ENCODE measurements at regions of chr16 and their contacts with region 1.

Region 1: DNA sequence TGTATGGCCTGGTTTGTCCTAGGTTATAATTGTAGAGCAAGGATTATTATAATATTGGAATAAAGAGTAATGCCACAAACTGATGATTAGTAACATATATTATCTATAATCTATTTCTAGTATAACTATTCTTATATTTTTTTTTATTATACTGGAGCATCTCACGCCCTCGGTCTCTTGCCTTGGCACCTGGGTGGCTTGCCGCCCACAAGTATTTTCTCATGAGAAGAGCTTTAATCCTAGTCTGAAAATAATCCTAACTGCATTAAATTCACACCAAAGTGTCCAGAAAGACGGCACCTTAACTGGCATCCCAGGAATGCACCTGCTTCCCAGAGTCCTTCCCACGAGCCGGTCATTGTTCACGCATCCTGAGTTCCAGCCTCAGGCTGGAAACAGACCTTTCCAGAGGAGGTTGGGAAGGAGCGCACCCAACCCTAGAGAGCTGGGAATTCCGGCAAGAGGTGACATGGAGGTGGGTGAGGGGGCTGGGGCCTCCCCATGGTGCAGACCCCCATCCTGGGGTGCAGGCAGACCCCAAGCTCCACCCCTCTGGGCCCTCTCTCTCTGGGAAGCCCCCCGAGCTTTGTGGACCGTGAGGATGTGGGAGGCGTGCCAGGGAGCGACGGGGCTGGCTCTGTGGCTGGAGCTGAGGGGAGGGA is 15.9 kb downstream of the CHMP1A start:
- DNase-seq: no peak
- ATAC-seq: no peak
- H3K4me3 ChIP-seq: no peak overlapping the region
- H3K4me3 Mint-ChIP-seq: peak overlapping the region; percentile 70
- H3K27ac ChIP-seq: no peak overlapping the region
- H3K27ac Mint-ChIP-seq: no peak overlapping the region
- H3K4me1 ChIP-seq: peaks cover 9% of the 10 kb centered on the region
- H3K4me1 Mint-ChIP-seq: peaks cover 8% of the 10 kb centered on the region
- H3K27me3 ChIP-seq: peaks cover 0 to 2% of the 10 kb centered on the region in 2 experiments
- H3K27me3 Mint-ChIP-seq: no peaks in the 10 kb centered on the region
- CTCF ChIP-seq: no peak

Region 2: DNA sequence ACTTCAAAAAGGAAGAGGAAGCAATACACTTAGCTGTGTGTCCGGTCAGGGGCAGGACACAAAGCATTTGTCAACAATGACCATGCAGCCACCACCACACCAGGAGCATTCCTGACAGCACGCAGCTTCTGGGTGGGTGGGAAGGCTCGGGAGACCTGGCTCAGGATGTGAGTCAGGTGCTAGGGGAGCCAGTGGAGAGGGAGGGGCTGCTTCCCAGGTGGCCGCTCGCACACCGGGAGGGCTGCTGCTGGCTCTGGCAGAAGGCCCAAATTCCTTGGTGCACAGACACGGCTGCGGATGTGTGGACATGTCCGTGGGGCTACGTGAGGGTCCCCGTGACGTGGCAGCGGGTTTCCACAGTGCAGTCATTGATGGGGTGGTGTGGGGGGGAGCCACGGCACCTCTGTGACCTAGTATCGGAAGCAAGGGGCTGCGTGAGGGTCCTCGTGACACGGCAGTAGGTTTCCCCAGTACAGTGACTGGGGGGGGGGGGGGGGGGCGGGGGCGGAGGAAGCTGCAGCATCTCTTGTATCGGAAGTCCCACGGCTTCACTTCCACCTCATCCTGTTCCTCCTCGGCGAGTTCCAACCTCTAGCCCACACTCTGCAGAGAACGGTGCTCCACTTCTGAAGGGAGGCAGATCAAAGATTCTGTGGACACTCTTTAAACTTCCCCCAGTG is 311.3 kb before region 1 on chr16:
- CTCF ChIA-PET with region 1: no interaction called
- POLR2A ChIA-PET with region 1: no interaction called
- intact Hi-C with region 1: loop called in 1 of 2 experiments (anchors 1 kb)
- DNase-seq: peak in 6 of 9 experiments; percentile 23 to 85 (median 51)
- ATAC-seq: peak; percentile 55
- H3K4me3 ChIP-seq: peak overlapping the region; percentile 16 to 43
- H3K4me3 Mint-ChIP-seq: peak overlapping the region; percentile 60
- H3K27ac ChIP-seq: peak overlapping the region; percentile 45 to 81
- H3K27ac Mint-ChIP-seq: peak overlapping the region; percentile 73
- H3K4me1 ChIP-seq: peaks cover 77% of the 10 kb centered on the region
- H3K4me1 Mint-ChIP-seq: peaks cover 83% of the 10 kb centered on the region
- H3K27me3 ChIP-seq: no peaks in the 10 kb centered on the region
- H3K27me3 Mint-ChIP-seq: no peaks in the 10 kb centered on the region
- CTCF ChIP-seq: no peak

Region 3: GRCh38 chr16:89534252-89534756 is 107.3 kb before region 1 on chr16:
- CTCF ChIA-PET with region 1: interaction called, 3 read pairs
- POLR2A ChIA-PET with region 1: no interaction called
- intact Hi-C with region 1: loop called in 1 of 2 experiments (anchors 1 kb)
- DNase-seq: peak; percentile 6 to 78 (median 59)
- ATAC-seq: peak; percentile 93
- H3K4me3 ChIP-seq: peak overlapping the region in 1 of 2 experiments; percentile 7
- H3K4me3 Mint-ChIP-seq: peak overlapping the region; percentile 55
- H3K27ac ChIP-seq: peak overlapping the region; percentile 9 to 49
- H3K27ac Mint-ChIP-seq: peak overlapping the region; percentile 94
- H3K4me1 ChIP-seq: peaks cover 24% of the 10 kb centered on the region
- H3K4me1 Mint-ChIP-seq: peaks cover 25% of the 10 kb centered on the region
- H3K27me3 ChIP-seq: no peaks in the 10 kb centered on the region
- H3K27me3 Mint-ChIP-seq: no peaks in the 10 kb centered on the region
- CTCF ChIP-seq: no peak

Region 4: DNA sequence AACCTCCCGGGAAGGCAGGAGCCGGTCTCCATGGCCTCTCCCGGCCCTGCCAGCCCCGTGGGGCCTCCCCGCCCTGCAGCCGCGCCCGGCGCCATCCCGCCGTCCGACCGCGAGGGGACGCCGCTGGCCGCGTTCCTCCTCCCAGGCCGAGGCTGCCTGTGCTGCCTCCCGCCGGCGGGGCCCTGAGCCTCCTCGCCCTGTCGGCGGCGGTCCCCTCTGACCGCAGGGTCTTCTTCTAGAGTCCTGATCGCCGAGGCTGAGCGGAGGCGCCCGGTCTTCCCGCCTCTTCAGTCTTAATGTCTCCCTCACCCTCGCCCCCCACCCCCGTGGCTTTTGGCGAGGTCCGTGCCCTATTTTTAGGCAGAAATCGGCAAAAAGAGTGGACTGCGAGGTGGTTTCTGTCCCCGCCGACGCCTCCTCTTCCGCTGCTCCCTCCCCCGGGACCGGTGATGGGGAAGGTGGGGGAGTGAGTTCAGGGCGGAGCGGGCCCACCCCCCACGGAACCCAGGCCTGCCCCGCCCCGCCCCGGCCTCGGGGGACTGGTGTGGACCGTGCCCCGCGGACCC is 66.8 kb before region 1 on chr16:
- CTCF ChIA-PET with region 1: no interaction called
- POLR2A ChIA-PET with region 1: no interaction called
- intact Hi-C with region 1: loop called in 1 of 2 experiments (anchors 5 kb)
- DNase-seq: peak in 7 of 9 experiments; percentile 40 to 71 (median 57)
- ATAC-seq: peak; percentile 53
- H3K4me3 ChIP-seq: peak overlapping the region; percentile 30 to 35
- H3K4me3 Mint-ChIP-seq: peak overlapping the region; percentile 53
- H3K27ac ChIP-seq: no peak overlapping the region
- H3K27ac Mint-ChIP-seq: no peak overlapping the region
- H3K4me1 ChIP-seq: peaks cover 25% of the 10 kb centered on the region
- H3K4me1 Mint-ChIP-seq: peaks cover 16% of the 10 kb centered on the region
- H3K27me3 ChIP-seq: peaks cover 10 to 14% of the 10 kb centered on the region in 2 experiments
- H3K27me3 Mint-ChIP-seq: peaks cover 19% of the 10 kb centered on the region
- CTCF ChIP-seq: no peak

Region 5: GRCh38 chr16:89602952-89603590 is 38.5 kb before region 1 on chr16:
- CTCF ChIA-PET with region 1: no interaction called
- POLR2A ChIA-PET with region 1: no interaction called
- intact Hi-C with region 1: no loop called
- DNase-seq: no peak
- ATAC-seq: no peak
- H3K4me3 ChIP-seq: no peak overlapping the region
- H3K4me3 Mint-ChIP-seq: peak overlapping the region; percentile 8
- H3K27ac ChIP-seq: no peak overlapping the region
- H3K27ac Mint-ChIP-seq: peak overlapping the region; percentile 14
- H3K4me1 ChIP-seq: peaks cover 12% of the 10 kb centered on the region
- H3K4me1 Mint-ChIP-seq: peaks cover 15% of the 10 kb centered on the region
- H3K27me3 ChIP-seq: no peaks in the 10 kb centered on the region
- H3K27me3 Mint-ChIP-seq: peaks cover 3% of the 10 kb centered on the region
- CTCF ChIP-seq: no peak